ENCODE measurements at regions of chr18 and their contacts with region 1.

Region 1: DNA sequence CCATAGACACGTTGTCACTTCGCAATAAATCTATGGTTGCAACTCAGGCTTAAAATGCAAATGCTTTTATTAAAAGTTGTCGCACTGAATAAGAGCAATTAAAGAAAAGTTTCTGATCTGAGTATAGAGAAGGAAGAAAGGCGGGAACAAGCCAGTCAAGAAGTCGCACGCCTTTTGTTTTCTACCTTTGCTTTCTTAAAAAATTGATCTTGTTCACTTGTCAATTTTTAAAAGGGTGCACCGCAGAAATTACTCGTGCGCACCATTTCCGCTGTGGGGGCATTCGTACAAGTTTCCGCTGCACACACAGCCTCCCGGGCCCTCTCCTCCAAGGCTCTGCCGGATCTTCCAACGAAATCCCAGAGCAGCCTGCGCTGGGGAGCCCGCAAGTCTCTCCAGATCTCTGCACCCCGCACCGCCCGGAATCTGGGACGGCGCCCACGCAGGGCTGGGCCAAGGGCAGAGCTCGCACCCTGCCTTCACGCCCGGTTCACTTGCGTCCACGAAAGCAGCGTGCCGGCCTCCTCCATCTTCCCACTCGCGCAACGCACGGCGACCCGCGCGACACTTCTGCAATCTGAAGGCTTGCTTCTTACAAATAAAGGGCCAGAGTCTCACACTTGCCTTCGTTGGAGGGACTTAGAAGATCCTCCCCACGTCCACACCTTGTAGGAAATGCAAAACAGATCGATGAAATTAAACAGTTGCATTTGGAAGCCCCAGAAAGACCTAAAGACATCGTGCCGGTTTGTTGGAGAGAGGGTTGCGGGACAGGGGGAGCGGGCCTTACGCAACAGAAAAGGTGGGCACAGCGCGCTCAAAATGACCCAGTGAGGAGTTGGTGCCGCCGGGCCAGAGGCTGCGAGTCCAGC is 2.6 kb upstream of the SALL3 start:
- DNase-seq: no peak
- ATAC-seq: no peak
- H3K4me3 ChIP-seq: no peak overlapping the region
- H3K4me3 Mint-ChIP-seq: peak overlapping the region; percentile 68
- H3K27ac ChIP-seq: no peak overlapping the region
- H3K27ac Mint-ChIP-seq: no peak overlapping the region
- H3K4me1 ChIP-seq: peaks cover 5% of the 10 kb centered on the region
- H3K4me1 Mint-ChIP-seq: peaks cover 0 to 5% of the 10 kb centered on the region in 2 donors
- H3K27me3 ChIP-seq: peaks cover 28% of the 10 kb centered on the region
- H3K27me3 Mint-ChIP-seq: peaks cover 52 to 61% of the 10 kb centered on the region in 2 donors
- CTCF ChIP-seq: no peak

Region 2: GRCh38 chr18:78494204-78495085 is 482.6 kb before region 1 on chr18:
- intact Hi-C with region 1: no loop called
- DNase-seq: no peak
- ATAC-seq: no peak
- H3K4me3 ChIP-seq: no peak overlapping the region
- H3K4me3 Mint-ChIP-seq: no peak overlapping the region
- H3K27ac ChIP-seq: no peak overlapping the region
- H3K27ac Mint-ChIP-seq: peak overlapping the region in 1 of 2 donors; percentile 60
- H3K4me1 ChIP-seq: no peaks in the 10 kb centered on the region
- H3K4me1 Mint-ChIP-seq: no peaks in the 10 kb centered on the region
- H3K27me3 ChIP-seq: no peaks in the 10 kb centered on the region
- H3K27me3 Mint-ChIP-seq: peaks cover 0 to under 1% of the 10 kb centered on the region in 2 donors
- CTCF ChIP-seq: no peak

Region 3: GRCh38 chr18:78820161-78820834 is 156.7 kb before region 1 on chr18:
- intact Hi-C with region 1: no loop called
- DNase-seq: no peak
- ATAC-seq: no peak
- H3K4me3 ChIP-seq: no peak overlapping the region
- H3K4me3 Mint-ChIP-seq: no peak overlapping the region
- H3K27ac ChIP-seq: no peak overlapping the region
- H3K27ac Mint-ChIP-seq: no peak overlapping the region
- H3K4me1 ChIP-seq: no peaks in the 10 kb centered on the region
- H3K4me1 Mint-ChIP-seq: no peaks in the 10 kb centered on the region
- H3K27me3 ChIP-seq: no peaks in the 10 kb centered on the region
- H3K27me3 Mint-ChIP-seq: peaks cover 6 to 8% of the 10 kb centered on the region in 2 donors
- CTCF ChIP-seq: no peak

Region 4: DNA sequence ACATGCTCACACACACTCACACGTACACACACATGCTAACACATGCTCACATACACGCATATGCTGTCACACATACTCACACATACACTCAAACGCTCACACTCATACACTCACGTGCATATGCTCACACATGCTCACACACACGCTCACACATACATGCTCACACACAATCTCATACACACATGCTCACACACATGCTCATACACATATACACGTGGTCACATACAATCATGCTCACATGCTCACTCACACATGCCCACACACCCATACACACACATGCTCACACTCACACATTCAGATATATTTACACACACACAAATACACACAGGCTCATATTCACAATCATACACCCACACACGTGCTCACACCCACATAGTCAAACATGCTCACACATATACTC is 14.9 kb before region 1 on chr18:
- intact Hi-C with region 1: loop called (anchors 1 kb)
- DNase-seq: no peak
- ATAC-seq: peak in 1 of 3 donors; percentile 28
- H3K4me3 ChIP-seq: no peak overlapping the region
- H3K4me3 Mint-ChIP-seq: no peak overlapping the region
- H3K27ac ChIP-seq: no peak overlapping the region
- H3K27ac Mint-ChIP-seq: no peak overlapping the region
- H3K4me1 ChIP-seq: no peaks in the 10 kb centered on the region
- H3K4me1 Mint-ChIP-seq: no peaks in the 10 kb centered on the region
- H3K27me3 ChIP-seq: no peaks in the 10 kb centered on the region
- H3K27me3 Mint-ChIP-seq: peaks cover 0 to 3% of the 10 kb centered on the region in 2 donors
- CTCF ChIP-seq: no peak

Region 5: GRCh38 chr18:78999937-79000336 is 22.9 kb after region 1 on chr18:
- intact Hi-C with region 1: no loop called
- DNase-seq: no peak
- ATAC-seq: no peak
- H3K4me3 ChIP-seq: no peak overlapping the region
- H3K4me3 Mint-ChIP-seq: no peak overlapping the region
- H3K27ac ChIP-seq: no peak overlapping the region
- H3K27ac Mint-ChIP-seq: no peak overlapping the region
- H3K4me1 ChIP-seq: no peaks in the 10 kb centered on the region
- H3K4me1 Mint-ChIP-seq: no peaks in the 10 kb centered on the region
- H3K27me3 ChIP-seq: no peaks in the 10 kb centered on the region
- H3K27me3 Mint-ChIP-seq: peaks cover 2 to 29% of the 10 kb centered on the region in 2 donors
- CTCF ChIP-seq: no peak

Region 6: DNA sequence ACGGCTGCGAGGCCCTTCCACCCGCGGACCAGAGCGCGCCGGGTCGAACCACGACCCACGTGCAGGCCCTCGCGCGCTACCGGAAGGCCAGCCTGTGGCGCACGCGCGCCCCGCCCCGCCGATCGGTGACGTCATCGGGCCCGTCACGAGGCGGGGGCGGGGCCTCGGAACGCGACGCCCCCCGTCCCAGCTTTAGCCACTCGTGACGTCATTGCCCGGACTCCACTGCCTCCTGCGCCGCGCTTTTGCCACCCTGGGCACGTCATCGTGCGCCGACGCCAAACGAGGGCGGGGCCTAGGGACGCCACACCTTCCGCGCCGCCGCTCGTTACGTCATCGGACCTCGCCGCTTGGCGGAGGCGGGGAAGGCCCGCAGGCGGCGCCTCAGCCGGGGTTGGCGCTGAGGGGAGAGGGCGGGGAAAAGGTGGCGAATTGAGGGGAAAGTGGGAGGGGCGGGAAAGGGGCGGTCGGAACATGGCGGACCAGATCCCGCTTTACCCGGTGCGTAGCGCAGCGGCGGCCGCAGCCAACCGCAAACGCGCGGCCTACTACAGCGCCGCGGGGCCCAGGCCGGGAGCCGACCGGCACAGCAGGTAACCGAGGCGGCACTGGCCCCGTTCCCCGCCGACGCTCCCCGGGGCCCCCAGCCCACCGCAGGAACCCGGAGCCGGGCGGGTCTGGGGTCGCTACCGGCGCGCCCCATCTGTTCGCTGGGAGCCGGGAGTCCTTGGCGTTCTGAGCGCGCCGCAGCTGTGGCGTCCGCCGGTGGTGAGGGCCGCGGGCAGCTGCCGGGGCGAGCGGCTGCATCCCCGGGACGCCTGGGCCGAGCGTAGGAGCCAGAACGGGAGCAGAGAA is 92.2 kb after region 1 on chr18 and contains the start of gene ATP9B:
- intact Hi-C with region 1: no loop called
- DNase-seq: peak; percentile 100
- ATAC-seq: peak; percentile 76 to 89 (median 82)
- H3K4me3 ChIP-seq: peak within 1 kb of the TSS; percentile 54
- H3K4me3 Mint-ChIP-seq: peak within 1 kb of the TSS; percentile 85
- H3K27ac ChIP-seq: peak within 1 kb of the TSS; percentile 94
- H3K27ac Mint-ChIP-seq: peak within 1 kb of the TSS; percentile 85 to 94
- H3K4me1 ChIP-seq: peaks cover 14% of the 10 kb centered on the region
- H3K4me1 Mint-ChIP-seq: peaks cover 36 to 58% of the 10 kb centered on the region in 2 donors
- H3K27me3 ChIP-seq: no peaks in the 10 kb centered on the region
- H3K27me3 Mint-ChIP-seq: peaks cover 0 to 15% of the 10 kb centered on the region in 2 donors
- CTCF ChIP-seq: no peak
- total RNA-seq, gene ATP9B: 66.0 to 78.9 (median 68.0) TPM

Measured in natural killer cell (primary cell).